Activated CD4-positive, alpha-beta memory T cell treated with anti-CD3 and anti-CD28 coated beads for 36 hours (primary cell): ENCODE measurements at regions of chrX and their contacts with region 1.

Region 1: GRCh38 chrX:118566359-118566758 is 70.7 kb downstream of the DOCK11 start:
- DNase-seq: no peak
- H3K4me3 Mint-ChIP-seq: no peak overlapping the region
- H3K27ac Mint-ChIP-seq: no peak overlapping the region
- H3K4me1 Mint-ChIP-seq: peaks cover 41% of the 10 kb centered on the region
- H3K27me3 Mint-ChIP-seq: no peaks in the 10 kb centered on the region

Region 2: GRCh38 chrX:118495061-118495921 is 71.1 kb before region 1 on chrX and contains the start of gene DOCK11:
- CTCF ChIA-PET with region 1: no interaction called
- POLR2A ChIA-PET with region 1: no interaction called
- intact Hi-C with region 1: loop called (anchors 1 kb)
- DNase-seq: peak; percentile 90
- H3K4me3 Mint-ChIP-seq: peak within 1 kb of the TSS; percentile 99
- H3K27ac Mint-ChIP-seq: peak within 1 kb of the TSS; percentile 97
- H3K4me1 Mint-ChIP-seq: peaks cover 24% of the 10 kb centered on the region
- H3K27me3 Mint-ChIP-seq: no peaks in the 10 kb centered on the region
- total RNA-seq, gene DOCK11: 47.5 to 50.4 TPM